Activated CD4-positive, alpha-beta memory T cell treated with anti-CD3 and anti-CD28 coated beads for 36 hours (primary cell): ENCODE measurements at regions of chrX and their contacts with region 1.

Region 1: DNA sequence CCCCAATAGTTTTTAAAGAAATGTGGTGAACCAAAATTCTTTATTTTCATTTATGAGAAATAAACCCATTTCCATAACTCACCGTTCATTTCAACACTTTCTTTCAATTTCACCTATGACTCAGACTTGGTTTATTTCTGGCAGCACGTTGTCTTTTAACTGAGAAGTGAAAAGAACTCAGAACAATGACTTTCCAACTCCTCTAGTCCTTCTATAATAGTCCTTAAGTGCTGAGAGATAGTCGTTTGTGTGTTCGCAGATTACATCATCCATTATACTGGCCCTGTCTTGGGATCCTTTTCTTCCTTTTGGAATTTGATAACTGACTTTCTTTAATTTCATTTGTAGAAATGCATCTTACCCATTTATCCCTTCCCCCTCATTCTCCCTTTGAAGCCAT is 113.6 kb downstream of the GLUD2 start:
- DNase-seq: no peak
- H3K4me3 Mint-ChIP-seq: peak overlapping the region; percentile 21
- H3K27ac Mint-ChIP-seq: peak overlapping the region; percentile 74
- H3K4me1 Mint-ChIP-seq: peaks cover 32% of the 10 kb centered on the region
- H3K27me3 Mint-ChIP-seq: no peaks in the 10 kb centered on the region

Region 2: GRCh38 chrX:120111611-120112010 is 1049.4 kb before region 1 on chrX:
- CTCF ChIA-PET with region 1: no interaction called
- POLR2A ChIA-PET with region 1: no interaction called
- intact Hi-C with region 1: no loop called
- DNase-seq: no peak
- H3K4me3 Mint-ChIP-seq: no peak overlapping the region
- H3K27ac Mint-ChIP-seq: no peak overlapping the region
- H3K4me1 Mint-ChIP-seq: no peaks in the 10 kb centered on the region
- H3K27me3 Mint-ChIP-seq: no peaks in the 10 kb centered on the region

Region 3: GRCh38 chrX:120797188-120797851 is 363.7 kb before region 1 on chrX:
- CTCF ChIA-PET with region 1: no interaction called
- POLR2A ChIA-PET with region 1: no interaction called
- intact Hi-C with region 1: loop called (anchors 2 kb)
- DNase-seq: no peak
- H3K4me3 Mint-ChIP-seq: no peak overlapping the region
- H3K27ac Mint-ChIP-seq: peak overlapping the region; percentile 76
- H3K4me1 Mint-ChIP-seq: peaks cover 68% of the 10 kb centered on the region
- H3K27me3 Mint-ChIP-seq: no peaks in the 10 kb centered on the region